Head of caudate nucleus (tissue), 42 donors: ENCODE measurements at regions of chr2 and their contacts with region 1.

Region 1: GRCh38 chr2:58427572-58428095 is 186.5 kb upstream of the FANCL start:
- DNase-seq: peak; percentile 58 to 89 (median 78)

Region 2: DNA sequence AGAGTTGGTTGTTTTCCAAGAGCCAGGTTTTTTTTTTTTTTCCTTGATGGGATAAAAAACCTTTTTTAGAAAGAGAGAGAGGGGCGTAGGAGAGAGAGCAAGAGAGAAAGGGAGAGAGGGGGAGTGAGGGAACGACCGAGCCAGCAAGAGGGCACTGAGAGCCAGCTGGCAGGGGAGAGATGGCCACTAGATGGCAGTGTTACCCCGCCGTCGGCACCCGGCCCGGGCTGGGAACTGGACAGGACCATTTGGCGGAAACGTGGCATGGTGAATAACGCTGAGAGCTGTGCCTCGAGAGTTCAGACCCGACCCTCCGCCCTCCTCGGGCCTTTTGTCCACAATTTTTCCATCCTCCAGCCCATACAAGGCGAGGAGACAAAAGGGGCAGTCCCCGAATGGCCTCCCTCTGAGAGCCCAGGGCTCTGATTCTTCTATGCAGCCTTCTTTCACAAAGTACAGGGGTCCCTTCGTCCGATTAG is 667.8 kb before region 1 on chr2:
- intact Hi-C with region 1: loop called (anchors 10 kb)
- DNase-seq: peak; percentile 78 to 98 (median 94)

Region 3: DNA sequence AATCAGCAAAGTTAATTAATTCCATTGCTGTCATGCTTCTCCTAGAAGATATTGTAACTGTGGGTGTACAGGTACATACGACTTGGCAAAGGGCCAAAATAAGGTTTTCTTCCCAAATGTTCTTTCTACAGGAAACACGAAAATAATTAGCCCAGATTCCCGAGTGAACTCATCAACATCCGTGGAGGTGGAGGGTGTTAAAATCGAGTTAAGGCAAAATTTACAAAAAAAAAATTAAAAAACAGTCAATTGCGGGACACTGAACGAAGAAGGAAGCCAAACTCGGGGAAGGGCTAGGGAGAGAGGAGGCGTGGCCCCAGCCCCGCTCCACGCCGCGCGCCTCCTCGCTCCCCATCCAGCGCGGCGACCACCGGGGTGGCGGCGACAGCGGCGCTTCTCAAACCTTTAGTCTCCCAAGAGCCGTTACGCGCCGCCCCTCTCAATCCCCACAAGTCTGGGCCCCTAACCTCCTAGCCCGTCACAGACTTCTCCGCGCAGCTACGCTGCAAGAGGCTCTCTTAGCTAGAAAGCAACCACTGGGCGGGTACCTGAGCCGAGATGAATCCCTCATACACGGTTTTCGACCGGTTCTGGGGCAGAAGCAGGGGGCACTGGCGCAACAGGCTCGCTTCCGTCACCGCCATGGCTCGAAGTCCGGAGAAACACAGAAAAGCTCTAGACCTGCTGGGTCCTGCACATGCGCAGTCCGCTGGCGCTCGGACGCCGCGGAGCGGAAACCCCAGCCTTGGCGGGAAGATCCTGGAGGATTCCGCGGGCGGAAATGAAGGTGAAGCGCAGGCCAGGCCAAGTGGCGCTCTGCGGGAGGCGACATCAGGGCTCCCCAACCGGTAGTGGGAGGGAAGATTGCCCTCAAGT is 186.7 kb before region 1 on chr2 and contains the start of gene FANCL:
- intact Hi-C with region 1: loop called (anchors 5 kb)
- DNase-seq: peak; percentile 81 to 97 (median 92)